ENCODE measurements at regions of chr2 and their contacts with region 1.

Region 1: DNA sequence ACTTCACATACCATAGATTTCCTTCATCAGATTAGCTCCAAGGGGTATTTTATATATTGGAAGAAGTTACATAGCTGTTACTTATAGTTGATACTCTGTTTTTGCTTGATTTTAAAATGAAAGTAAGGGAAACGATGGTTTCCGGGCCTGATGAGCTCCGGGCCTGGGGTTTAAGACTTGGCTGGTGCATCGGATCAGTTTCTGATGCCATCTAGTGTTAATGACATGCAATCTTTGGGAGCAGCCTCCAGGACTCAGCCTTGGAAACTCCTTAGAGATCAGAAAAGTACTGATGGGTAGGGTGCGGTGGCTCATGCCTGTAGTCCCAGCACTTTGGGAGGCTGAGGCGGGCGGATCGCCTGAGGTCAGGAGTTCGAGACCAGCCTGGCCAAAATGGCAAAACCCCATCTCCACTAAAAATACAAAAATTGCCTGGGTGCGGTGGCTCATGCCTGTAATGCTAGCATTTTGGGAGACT is 47.1 kb upstream of the CNOT11 start:
- DNase-seq: peak; percentile 81
- H3K4me3 ChIP-seq: peak overlapping the region in 3 of 4 donors; percentile 21 to 34 (median 32)
- H3K27ac ChIP-seq: no peak overlapping the region
- H3K4me1 ChIP-seq: peaks cover 0 to 5% (median 2%) of the 10 kb centered on the region in 4 donors
- H3K27me3 ChIP-seq: no peaks in the 10 kb centered on the region
- CTCF ChIP-seq: peak; percentile 6 to 58 (median 32)
- EP300 ChIP-seq: no peak
- POLR2A ChIP-seq: no peak

Region 2: GRCh38 chr2:101012706-101013181 is 192.8 kb before region 1 on chr2:
- intact Hi-C with region 1: loop called (anchors 1 kb)
- DNase-seq: no peak
- H3K4me3 ChIP-seq: no peak overlapping the region
- H3K27ac ChIP-seq: no peak overlapping the region
- H3K4me1 ChIP-seq: peaks cover 0 to 2% (median 0%) of the 10 kb centered on the region in 4 donors
- H3K27me3 ChIP-seq: no peaks in the 10 kb centered on the region
- CTCF ChIP-seq: peak; percentile 62 to 81 (median 71)
- EP300 ChIP-seq: no peak
- POLR2A ChIP-seq: no peak

Measured in sigmoid colon (tissue), 7 donors.